SK-N-SH (cell line): ENCODE measurements at regions of chr5 and their contacts with region 1.

Region 1: GRCh38 chr5:113294311-113295110 is 140.3 kb downstream of the TSSK1B start:
- DNase-seq: peak; percentile 94
- H3K4me3 ChIP-seq: peak overlapping the region; percentile 70 to 86
- H3K27ac ChIP-seq: peak overlapping the region; percentile 38 to 89
- H3K4me1 ChIP-seq: peaks cover 0 to 14% of the 10 kb centered on the region in 2 experiments; a peak in 2 of 4 replicates
- H3K27me3 ChIP-seq: peaks cover 9% of the 10 kb centered on the region; the same call in 1 of the 2 replicates
- CTCF ChIP-seq: peak; percentile 28
- EP300 ChIP-seq: peak in 1 of 2 experiments; percentile 64; a peak in 2 of 4 replicates
- RAD21 ChIP-seq: peak; percentile 35

Region 2: DNA sequence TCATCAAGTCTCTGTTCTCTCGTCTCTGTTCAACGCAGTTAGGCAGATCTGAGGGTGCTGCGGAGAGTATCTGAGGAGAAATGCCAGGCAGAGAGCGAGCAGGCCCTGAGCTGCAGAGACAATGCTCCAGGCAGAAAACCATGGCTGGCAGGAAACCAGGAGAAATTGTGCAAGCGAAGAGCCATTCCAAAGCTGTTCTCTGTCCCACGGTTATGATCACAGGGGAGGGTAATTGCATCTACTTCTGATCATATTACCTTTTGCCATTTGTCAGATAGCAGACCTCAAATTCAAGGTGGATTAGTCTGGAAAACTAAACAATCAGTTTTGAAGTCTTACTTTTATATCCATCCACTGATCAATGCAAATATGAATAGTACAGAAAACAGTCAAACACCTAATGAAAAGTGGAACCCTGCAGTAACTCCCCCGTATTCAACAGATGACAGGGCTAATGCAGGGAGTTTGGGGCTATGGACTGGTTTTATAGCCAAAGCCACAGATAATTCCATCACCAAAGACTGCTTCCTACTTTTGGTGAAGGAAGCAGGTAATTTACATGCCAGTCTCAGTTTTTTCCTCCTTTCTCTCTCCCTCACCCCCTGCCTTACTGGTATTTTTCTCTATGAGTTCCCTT is 89.9 kb before region 1 on chr5:
- CTCF ChIA-PET with region 1: interaction called, 5 read pairs
- POLR2A ChIA-PET with region 1: interaction called, 10 read pairs
- DNase-seq: peak; percentile 56
- H3K4me3 ChIP-seq: no peak overlapping the region
- H3K27ac ChIP-seq: peak overlapping the region in 1 of 2 experiments; percentile 87; a peak in 2 of 4 replicates
- H3K4me1 ChIP-seq: peaks cover 0 to 50% of the 10 kb centered on the region in 2 experiments; a peak in 2 of 4 replicates
- H3K27me3 ChIP-seq: no peaks in the 10 kb centered on the region
- CTCF ChIP-seq: no peak
- EP300 ChIP-seq: peak in 1 of 2 experiments; percentile 77; a peak in 2 of 4 replicates
- RAD21 ChIP-seq: peak; percentile 34

Region 3: GRCh38 chr5:113281194-113281593 is 13.3 kb before region 1 on chr5:
- CTCF ChIA-PET with region 1: interaction called, 11 read pairs
- POLR2A ChIA-PET with region 1: no interaction called
- DNase-seq: peak; percentile 16
- H3K4me3 ChIP-seq: no peak overlapping the region
- H3K27ac ChIP-seq: peak overlapping the region in 1 of 2 experiments; percentile 44; a peak in 1 of 4 replicates
- H3K4me1 ChIP-seq: peaks cover 0 to 19% of the 10 kb centered on the region in 2 experiments; a peak in 2 of 4 replicates
- H3K27me3 ChIP-seq: no peaks in the 10 kb centered on the region
- CTCF ChIP-seq: no peak
- EP300 ChIP-seq: peak in 1 of 2 experiments; percentile 74; a peak in 1 of 4 replicates
- RAD21 ChIP-seq: no peak

Region 4: DNA sequence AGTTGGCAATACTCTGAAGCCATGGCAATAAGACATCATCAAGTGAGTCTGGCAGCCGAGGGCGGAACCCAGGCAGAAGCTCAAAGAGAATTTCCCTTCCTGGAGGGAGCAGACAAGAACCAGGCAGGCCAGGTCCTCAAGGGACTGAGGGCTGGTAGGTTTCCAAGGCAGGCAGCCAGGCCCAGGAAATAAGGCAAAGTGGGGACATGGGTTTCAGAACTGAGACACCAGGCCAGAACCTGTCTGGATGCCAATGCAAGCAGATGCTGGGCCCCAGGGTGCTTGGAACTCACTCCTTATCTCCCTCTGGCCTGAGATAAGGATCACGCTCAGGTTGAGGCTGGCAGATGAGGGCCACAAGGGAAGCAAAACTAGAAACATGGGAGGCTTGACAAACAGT is 131.4 kb after region 1 on chr5:
- CTCF ChIA-PET with region 1: no interaction called
- POLR2A ChIA-PET with region 1: no interaction called
- DNase-seq: no peak
- H3K4me3 ChIP-seq: no peak overlapping the region
- H3K27ac ChIP-seq: no peak overlapping the region
- H3K4me1 ChIP-seq: no peaks in the 10 kb centered on the region; a peak in 1 of 4 replicates
- H3K27me3 ChIP-seq: no peaks in the 10 kb centered on the region
- CTCF ChIP-seq: no peak
- EP300 ChIP-seq: no peak
- RAD21 ChIP-seq: no peak